ENCODE measurements at regions of chr11 and their contacts with region 1.

Region 1: GRCh38 chr11:45294499-45294898 is 8.4 kb upstream of the SYT13 start:
- DNase-seq: no peak
- H3K4me3 ChIP-seq: no peak overlapping the region
- H3K27ac ChIP-seq: no peak overlapping the region
- H3K4me1 ChIP-seq: peaks cover 14% of the 10 kb centered on the region
- CTCF ChIP-seq: no peak

Region 2: DNA sequence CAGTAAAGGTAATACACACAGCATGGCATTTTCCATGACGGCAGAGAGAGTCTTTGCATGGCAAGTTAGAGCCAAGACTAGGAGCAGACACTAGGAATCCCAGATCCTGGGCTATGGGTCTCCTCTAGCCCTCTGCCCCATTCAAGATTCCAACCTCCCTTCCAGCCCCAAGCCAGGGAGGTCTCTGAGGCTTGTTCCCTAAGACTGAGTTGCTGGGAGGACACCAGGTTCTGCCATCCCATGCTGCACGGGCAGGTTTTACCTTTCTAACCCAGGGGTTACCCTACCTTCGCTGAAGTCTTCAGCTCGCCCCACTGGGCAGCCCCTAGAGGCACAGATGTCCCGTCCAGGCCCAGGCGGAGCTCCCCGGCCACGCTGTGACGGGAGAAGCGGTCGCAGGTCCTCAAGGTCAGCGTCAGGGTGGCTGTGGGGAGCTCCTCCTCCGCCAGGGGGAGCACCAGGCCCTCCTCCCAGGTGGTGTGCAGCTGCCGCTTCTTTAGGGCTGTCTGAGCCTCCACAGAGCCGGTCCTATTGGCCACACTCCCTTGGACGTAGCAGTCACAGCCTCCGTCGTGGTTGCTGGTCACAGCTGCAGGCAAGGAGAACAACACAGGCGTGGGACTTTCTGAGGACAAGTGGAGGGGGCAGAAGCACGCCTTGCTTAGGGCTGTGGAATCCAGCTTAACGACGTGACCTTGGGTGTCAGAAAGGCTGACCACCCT is 42.2 kb before region 1 on chr11:
- CTCF ChIA-PET with region 1: interaction called, 3 read pairs
- POLR2A ChIA-PET with region 1: no interaction called
- intact Hi-C with region 1: loop called (anchors 5 kb)
- DNase-seq: peak; percentile 44
- H3K4me3 ChIP-seq: no peak overlapping the region
- H3K27ac ChIP-seq: no peak overlapping the region
- H3K4me1 ChIP-seq: peaks cover 9% of the 10 kb centered on the region
- CTCF ChIP-seq: peak; percentile 78

Region 3: GRCh38 chr11:45745065-45745811 is 450.7 kb after region 1 on chr11:
- CTCF ChIA-PET with region 1: no interaction called
- POLR2A ChIA-PET with region 1: no interaction called
- intact Hi-C with region 1: no loop called
- DNase-seq: no peak
- H3K4me3 ChIP-seq: no peak overlapping the region
- H3K27ac ChIP-seq: no peak overlapping the region
- H3K4me1 ChIP-seq: no peaks in the 10 kb centered on the region
- CTCF ChIP-seq: no peak

Measured in OCI-LY7 (cell line).